Head of caudate nucleus (tissue), 42 donors: ENCODE measurements at regions of chr1 and their contacts with region 1.

Region 1: DNA sequence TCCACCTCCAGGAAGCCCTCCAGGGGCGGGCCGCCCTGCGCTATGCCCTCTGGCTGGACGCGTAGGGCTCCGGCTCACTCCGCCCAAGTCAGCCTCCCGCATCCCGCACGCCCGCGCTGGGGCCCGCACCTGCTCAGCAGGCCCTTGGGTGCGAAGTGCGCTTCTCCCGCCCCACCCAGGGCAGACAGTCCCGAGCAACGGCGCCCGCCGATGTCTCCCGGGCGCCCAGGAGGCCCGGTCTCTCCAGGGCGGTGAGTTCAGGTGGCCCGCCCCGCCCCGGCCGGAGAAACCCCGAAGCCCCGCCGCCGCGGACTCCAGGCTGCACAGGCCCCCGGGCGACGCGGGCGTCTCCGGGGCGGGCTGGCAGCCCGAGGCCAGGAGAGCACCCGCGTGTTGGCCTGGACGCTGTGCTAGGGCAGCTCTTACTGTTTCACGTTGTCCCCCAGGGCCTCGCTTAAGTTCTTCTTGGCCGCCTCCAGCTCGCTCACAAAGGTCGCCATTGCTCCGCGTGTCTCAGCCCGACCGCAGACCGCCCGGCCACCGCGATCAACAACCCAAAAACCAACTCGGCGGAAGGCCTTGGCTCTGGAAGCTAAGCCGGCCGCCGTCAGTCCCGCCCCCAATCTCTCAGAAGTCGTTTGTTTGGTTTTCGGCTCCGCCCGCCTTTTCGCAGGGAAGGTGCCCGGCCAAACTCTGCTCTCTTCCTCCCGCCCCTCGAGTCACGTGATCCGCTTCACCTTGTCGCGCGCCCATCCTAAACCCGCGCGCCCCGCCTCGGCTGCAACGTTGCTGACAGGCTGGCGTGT is at the start of gene TADA1:
- DNase-seq: peak; percentile 97 to 100 (median 99)

Region 2: GRCh38 chr1:166838766-166839599 is 37.0 kb before region 1 on chr1 and contains the start of gene POGK:
- intact Hi-C with region 1: loop called (anchors 1 kb)
- DNase-seq: peak; percentile 78 to 97 (median 94)